ENCODE measurements at regions of chr9 and their contacts with region 1.

Region 1: GRCh38 chr9:104991144-104991953 is 63.4 kb upstream of the ABCA1 start:
- DNase-seq: peak; percentile 95
- ATAC-seq: peak; percentile 91

Region 2: GRCh38 chr9:105046907-105047741 is 55.8 kb after region 1 on chr9:
- intact Hi-C with region 1: loop called (anchors 10 kb)
- DNase-seq: no peak
- ATAC-seq: no peak